ENCODE measurements at regions of chr2 and their contacts with region 1.

Region 1: GRCh38 chr2:48651153-48651790 is 33.6 kb downstream of the GTF2A1L start:
- DNase-seq: no peak
- H3K4me3 ChIP-seq: no peak overlapping the region
- H3K27ac ChIP-seq: no peak overlapping the region
- H3K4me1 ChIP-seq: no peaks in the 10 kb centered on the region
- H3K27me3 ChIP-seq: no peaks in the 10 kb centered on the region
- CTCF ChIP-seq: no peak

Region 2: GRCh38 chr2:48452108-48452507 is 199.2 kb before region 1 on chr2:
- CTCF ChIA-PET with region 1: no interaction called
- dilution Hi-C with region 1: no loop called
- in situ Hi-C with region 1: no loop called
- intact Hi-C with region 1: no loop called
- DNase-seq: no peak
- H3K4me3 ChIP-seq: no peak overlapping the region
- H3K27ac ChIP-seq: no peak overlapping the region
- H3K4me1 ChIP-seq: peaks cover 11% of the 10 kb centered on the region
- H3K27me3 ChIP-seq: no peaks in the 10 kb centered on the region
- CTCF ChIP-seq: no peak

Region 3: GRCh38 chr2:48589170-48589767 is 62.0 kb before region 1 on chr2:
- CTCF ChIA-PET with region 1: no interaction called
- dilution Hi-C with region 1: no loop called
- in situ Hi-C with region 1: no loop called
- intact Hi-C with region 1: loop called (anchors 2 kb)
- DNase-seq: peak; percentile 19
- H3K4me3 ChIP-seq: no peak overlapping the region
- H3K27ac ChIP-seq: no peak overlapping the region
- H3K4me1 ChIP-seq: no peaks in the 10 kb centered on the region
- H3K27me3 ChIP-seq: no peaks in the 10 kb centered on the region
- CTCF ChIP-seq: peak; percentile 72 to 88